Activated naive CD4-positive, alpha-beta T cell treated with anti-CD3 and anti-CD28 coated beads for 36 hours (primary cell): ENCODE measurements at regions of chr15 and their contacts with region 1.

Region 1: GRCh38 chr15:88476635-88477060 is 9.1 kb downstream of the MRPS11 start:
- DNase-seq: peak; percentile 29
- H3K4me3 Mint-ChIP-seq: no peak overlapping the region
- H3K27ac Mint-ChIP-seq: no peak overlapping the region
- H3K4me1 Mint-ChIP-seq: peaks cover 9% of the 10 kb centered on the region
- H3K27me3 Mint-ChIP-seq: no peaks in the 10 kb centered on the region

Region 2: GRCh38 chr15:88513195-88513594 is 36.5 kb after region 1 on chr15:
- CTCF ChIA-PET with region 1: no interaction called
- intact Hi-C with region 1: no loop called
- DNase-seq: no peak
- H3K4me3 Mint-ChIP-seq: no peak overlapping the region
- H3K27ac Mint-ChIP-seq: no peak overlapping the region
- H3K4me1 Mint-ChIP-seq: no peaks in the 10 kb centered on the region
- H3K27me3 Mint-ChIP-seq: no peaks in the 10 kb centered on the region

Region 3: GRCh38 chr15:88610701-88611231 is 134.1 kb after region 1 on chr15:
- CTCF ChIA-PET with region 1: no interaction called
- intact Hi-C with region 1: loop called (anchors 1 kb)
- DNase-seq: no peak
- H3K4me3 Mint-ChIP-seq: no peak overlapping the region
- H3K27ac Mint-ChIP-seq: no peak overlapping the region
- H3K4me1 Mint-ChIP-seq: peaks cover 6% of the 10 kb centered on the region
- H3K27me3 Mint-ChIP-seq: peaks cover 49% of the 10 kb centered on the region

Region 4: DNA sequence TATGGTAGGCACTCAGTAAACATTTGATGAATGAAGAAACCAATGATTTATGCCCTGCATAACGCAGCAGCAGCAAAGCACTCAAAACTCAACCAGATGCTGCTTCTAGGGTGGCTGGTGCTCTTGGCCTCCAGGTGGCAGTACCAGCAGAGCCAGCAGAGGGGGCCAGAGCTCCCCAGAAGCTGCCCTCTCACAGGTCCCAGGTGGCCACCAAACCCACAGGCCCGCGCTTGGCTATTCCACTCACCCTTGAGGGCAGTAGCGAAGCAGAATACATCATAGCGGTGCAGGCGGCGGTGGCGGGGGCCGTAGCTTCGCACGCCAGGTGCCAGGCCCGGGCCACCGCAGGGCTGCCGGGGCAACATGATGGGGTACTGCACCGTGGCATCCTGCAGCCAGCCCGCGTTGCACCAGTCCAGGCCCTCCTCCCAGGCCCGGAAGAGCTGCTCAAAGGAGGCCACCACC is 402.1 kb after region 1 on chr15:
- CTCF ChIA-PET with region 1: no interaction called
- intact Hi-C with region 1: no loop called
- DNase-seq: peak; percentile 53
- H3K4me3 Mint-ChIP-seq: no peak overlapping the region
- H3K27ac Mint-ChIP-seq: no peak overlapping the region
- H3K4me1 Mint-ChIP-seq: no peaks in the 10 kb centered on the region
- H3K27me3 Mint-ChIP-seq: no peaks in the 10 kb centered on the region